Activated CD4-positive, alpha-beta T cell treated with anti-CD3 and anti-CD28 coated beads, Interleukin-2, amount 10 ng/mL, durations not matched to agents 24 days and 14 days (primary cell): ENCODE measurements at regions of chr15 and their contacts with region 1.

Region 1: DNA sequence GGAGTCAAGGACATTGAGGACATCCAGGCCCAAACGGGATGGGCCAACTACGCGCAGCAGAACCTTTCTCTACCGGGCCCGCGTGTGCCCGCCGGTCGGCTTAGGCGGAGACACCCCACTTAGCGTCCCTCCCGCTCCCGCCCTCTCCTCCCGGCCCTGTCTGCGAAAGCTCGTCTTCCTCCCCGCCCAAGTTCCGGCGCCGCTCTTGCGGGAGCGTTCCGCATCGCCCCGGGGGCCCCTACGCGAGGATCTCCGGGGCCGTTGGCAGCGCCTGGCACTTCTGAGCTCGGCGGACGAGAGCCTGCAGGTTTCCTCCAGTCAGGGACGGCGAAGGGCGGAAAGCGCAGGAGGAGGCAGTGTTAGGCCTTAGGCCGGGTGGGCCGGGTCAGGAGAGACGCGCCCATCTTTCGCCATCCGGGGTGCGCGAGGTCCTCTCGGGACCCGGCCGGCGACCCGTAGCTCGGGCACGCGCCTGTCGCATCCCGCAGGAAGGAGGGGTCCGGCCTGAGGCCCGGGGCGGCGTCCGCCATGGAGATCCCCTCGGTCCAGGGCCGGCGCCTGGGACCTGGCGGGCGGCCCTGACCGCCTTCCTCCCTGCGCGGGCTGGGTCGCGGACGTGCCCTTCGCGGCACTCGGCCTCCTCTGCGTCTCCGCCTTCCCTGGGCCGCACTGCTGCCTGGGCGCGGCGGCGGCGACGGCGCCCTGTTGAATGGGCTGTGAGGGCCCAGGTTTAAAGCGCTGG is at the start of gene FEM1B:
- DNase-seq: peak; percentile 96
- H3K4me3 Mint-ChIP-seq: peak within 1 kb of the TSS; percentile 95
- H3K27ac Mint-ChIP-seq: peak within 1 kb of the TSS; percentile 96
- H3K4me1 Mint-ChIP-seq: peaks cover 48% of the 10 kb centered on the region
- H3K27me3 Mint-ChIP-seq: no peaks in the 10 kb centered on the region
- total RNA-seq, gene FEM1B: 46.2 and 51.6 TPM in 2 replicates

Region 2: DNA sequence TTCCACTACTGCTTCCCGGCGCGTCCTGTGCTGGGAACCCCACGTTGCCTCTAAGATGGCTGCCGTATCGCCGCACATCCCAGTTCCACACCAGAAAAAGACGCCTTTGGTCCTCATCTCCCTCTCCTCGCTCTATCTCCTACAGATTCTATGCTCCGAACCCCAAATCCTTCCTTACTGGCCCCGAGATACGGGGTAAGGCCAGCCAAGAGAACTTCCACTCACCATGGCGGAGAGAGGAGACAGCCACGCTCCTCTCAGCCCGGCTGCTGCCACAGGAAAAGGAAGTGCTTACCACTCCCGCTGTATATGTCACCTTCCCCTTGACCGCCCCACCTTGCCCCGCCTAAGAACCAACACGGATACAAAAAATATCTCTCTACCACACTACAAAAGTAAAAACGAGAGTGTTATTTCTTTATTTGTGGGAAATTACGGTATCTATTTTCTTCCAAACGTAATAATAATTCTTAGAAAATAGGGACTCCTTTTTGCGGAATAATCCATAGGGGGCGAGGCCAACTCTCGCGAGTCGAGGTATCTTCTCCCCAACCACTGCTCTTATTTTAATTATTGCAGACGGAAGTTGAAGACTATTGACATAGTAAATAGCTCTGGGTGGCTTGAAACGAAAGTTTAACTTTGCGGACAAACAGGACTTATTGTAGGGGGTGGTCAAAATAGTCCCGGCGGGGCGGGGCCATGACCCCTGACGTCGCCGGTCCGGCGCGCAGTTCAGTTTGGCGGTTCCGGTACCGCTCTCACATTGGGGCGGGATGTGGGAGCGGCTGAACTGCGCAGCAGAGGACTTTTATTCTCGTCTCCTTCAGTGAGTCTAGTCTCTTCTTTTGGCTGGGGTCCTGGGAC is 1773.0 kb before region 1 on chr15 and contains the starts of genes RPL4 and ZWILCH:
- intact Hi-C with region 1: loop called (anchors 10 kb)
- DNase-seq: peak; percentile 95
- H3K4me3 Mint-ChIP-seq: peak within 1 kb of the TSS; percentile 92
- H3K27ac Mint-ChIP-seq: peak within 1 kb of the TSS; percentile 98
- H3K4me1 Mint-ChIP-seq: peaks cover 48% of the 10 kb centered on the region
- H3K27me3 Mint-ChIP-seq: no peaks in the 10 kb centered on the region
- total RNA-seq, gene RPL4: 3,393 and 3,435 TPM in 2 replicates
- total RNA-seq, gene ZWILCH: 37.1 and 41.1 TPM in 2 replicates

Region 3: GRCh38 chr15:68053701-68054627 is 223.8 kb before region 1 on chr15 and contains the start of gene PIAS1:
- intact Hi-C with region 1: loop called (anchors 10 kb)
- DNase-seq: peak; percentile 98
- H3K4me3 Mint-ChIP-seq: peak within 1 kb of the TSS; percentile 93
- H3K27ac Mint-ChIP-seq: peak within 1 kb of the TSS; percentile 94
- H3K4me1 Mint-ChIP-seq: peaks cover 32% of the 10 kb centered on the region
- H3K27me3 Mint-ChIP-seq: peaks cover 7% of the 10 kb centered on the region
- total RNA-seq, gene PIAS1: 27.8 and 29.4 TPM in 2 replicates

Region 4: DNA sequence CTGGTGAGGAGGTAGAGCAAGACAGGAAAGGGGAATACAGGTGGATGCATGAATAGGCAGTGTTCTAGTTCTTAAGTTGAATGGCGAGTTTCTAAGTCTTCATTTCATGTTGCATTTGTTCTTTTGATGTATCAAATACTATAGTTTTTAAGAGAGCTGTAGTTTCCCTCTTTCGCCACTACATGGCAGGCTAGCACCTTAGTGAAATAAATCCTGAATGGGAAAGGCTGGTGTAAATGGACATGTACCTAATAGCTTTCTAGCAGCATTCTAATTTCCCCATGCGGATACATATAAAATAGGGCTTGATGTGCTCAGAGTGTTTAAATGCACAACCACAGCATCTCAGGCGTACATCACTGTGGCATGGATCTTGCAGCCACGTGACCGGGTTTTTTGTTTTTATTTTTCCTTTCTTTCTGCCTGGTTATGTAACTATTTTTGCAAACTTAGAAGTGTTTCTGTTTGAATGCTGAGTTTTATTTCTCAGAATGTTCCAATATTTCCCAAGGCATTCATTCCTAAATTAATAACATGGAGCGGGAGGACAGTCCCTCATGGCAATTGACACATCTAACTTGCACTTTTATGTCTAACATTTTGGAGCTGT is 24.7 kb before region 1 on chr15:
- intact Hi-C with region 1: loop called (anchors 1 kb)
- DNase-seq: peak; percentile 84
- H3K4me3 Mint-ChIP-seq: no peak overlapping the region
- H3K27ac Mint-ChIP-seq: no peak overlapping the region
- H3K4me1 Mint-ChIP-seq: peaks cover 8% of the 10 kb centered on the region
- H3K27me3 Mint-ChIP-seq: peaks cover 31% of the 10 kb centered on the region

Region 5: GRCh38 chr15:68304589-68305337 is 27.0 kb after region 1 on chr15:
- intact Hi-C with region 1: loop called (anchors 1 kb)
- DNase-seq: no peak
- H3K4me3 Mint-ChIP-seq: no peak overlapping the region
- H3K27ac Mint-ChIP-seq: peak overlapping the region; percentile 45
- H3K4me1 Mint-ChIP-seq: peaks cover 20% of the 10 kb centered on the region
- H3K27me3 Mint-ChIP-seq: peaks cover 6% of the 10 kb centered on the region